ENCODE measurements at regions of chr6 and their contacts with region 1.

Region 1: DNA sequence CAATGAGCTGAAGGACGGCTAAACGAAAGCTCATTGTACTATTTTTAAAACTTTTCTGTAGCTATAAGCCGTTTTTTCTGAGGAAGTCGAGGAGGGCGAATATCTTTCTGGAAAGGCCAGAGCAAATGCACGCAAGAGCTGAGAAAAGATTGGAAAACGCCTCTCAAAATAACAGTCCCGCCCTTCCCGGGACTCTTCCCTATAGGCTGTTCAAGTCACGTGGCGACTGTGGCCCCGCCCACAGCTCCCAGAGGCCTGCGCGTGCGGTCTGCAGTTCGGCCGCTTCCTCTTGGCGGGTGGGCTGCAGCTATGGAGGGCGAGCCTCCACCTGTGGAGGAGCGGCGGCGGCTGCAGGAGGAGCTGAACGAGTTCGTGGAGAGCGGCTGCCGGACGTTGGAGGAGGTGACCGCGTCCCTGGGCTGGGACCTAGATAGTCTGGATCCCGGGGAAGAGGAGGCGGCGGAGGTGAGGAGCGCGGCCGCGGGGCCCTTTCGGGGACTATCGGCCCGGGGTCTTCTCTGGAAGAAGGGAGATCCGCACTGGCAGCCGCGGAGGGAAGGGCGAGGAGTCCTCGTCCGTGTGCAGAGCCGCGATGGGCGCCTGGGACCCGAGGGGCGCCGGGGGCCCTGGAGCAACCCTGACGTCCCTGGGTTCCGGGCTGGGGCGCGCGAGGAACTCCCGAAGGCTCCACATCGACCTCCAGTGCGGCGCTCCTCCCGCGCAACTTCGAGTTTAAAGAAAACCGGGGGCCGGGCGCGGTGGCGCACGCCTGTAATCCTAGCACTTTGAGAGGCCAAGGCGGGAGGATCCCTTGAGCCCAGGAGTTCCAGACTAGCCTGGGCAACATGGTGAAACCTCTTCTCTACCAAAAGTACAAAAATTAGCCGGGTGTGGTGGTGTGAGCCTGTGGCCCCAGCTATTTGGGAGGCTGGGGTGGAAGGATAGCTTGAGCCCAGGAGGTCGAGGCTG is at the start of gene SNRNP48:
- H3K4me3 Mint-ChIP-seq: peak within 1 kb of the TSS; percentile 89
- H3K27ac Mint-ChIP-seq: peak within 1 kb of the TSS; percentile 92
- H3K4me1 Mint-ChIP-seq: peaks cover 35% of the 10 kb centered on the region
- H3K27me3 Mint-ChIP-seq: no peaks in the 10 kb centered on the region

Region 2: GRCh38 chr6:7304821-7305220 is 285.4 kb before region 1 on chr6:
- intact Hi-C with region 1: loop called (anchors 5 kb)
- H3K4me3 Mint-ChIP-seq: no peak overlapping the region
- H3K27ac Mint-ChIP-seq: peak overlapping the region; percentile 13
- H3K4me1 Mint-ChIP-seq: peaks cover 44% of the 10 kb centered on the region
- H3K27me3 Mint-ChIP-seq: no peaks in the 10 kb centered on the region

Region 3: DNA sequence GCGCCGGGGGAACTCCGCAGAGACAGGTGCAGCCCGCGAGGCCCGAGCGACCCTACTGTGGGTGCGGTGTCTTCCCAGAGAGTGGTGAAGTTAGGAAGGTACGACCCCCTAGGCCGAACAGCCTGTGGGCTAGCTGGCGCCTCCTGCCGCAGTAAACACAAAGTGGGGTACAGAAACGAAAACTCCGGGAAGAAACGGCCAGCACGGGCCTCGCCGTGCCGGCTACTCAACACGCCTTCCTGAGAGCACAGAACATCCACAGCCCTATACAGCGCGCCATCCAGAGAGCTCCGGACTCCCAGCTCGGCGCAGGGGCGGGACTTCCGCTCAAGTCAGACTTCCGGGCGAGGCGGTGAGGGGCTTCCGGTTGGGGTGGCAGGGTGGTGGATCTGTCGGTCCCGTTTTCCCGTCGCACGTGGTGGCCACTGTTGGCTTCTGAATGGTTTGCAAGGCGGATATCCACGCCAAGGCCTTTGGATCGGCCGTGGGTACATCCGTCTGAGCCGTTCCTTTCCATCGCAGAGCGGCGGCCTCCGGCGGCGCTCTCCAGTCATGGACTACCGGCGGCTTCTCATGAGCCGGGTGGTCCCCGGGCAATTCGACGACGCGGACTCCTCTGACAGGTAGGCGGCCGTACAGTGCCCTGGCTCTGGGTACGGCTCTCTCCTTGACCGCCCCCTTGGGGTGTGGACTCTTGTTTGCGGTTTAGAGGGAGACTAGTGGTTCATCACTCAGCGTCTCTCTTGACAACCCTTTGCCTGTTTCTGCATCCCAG is 200.6 kb before region 1 on chr6 and contains the starts of genes CAGE1 and RIOK1:
- intact Hi-C with region 1: loop called (anchors 1 kb)
- H3K4me3 Mint-ChIP-seq: peak within 1 kb of the TSS; percentile 84
- H3K27ac Mint-ChIP-seq: peak within 1 kb of the TSS; percentile 91
- H3K4me1 Mint-ChIP-seq: peaks cover 45% of the 10 kb centered on the region
- H3K27me3 Mint-ChIP-seq: no peaks in the 10 kb centered on the region

Region 4: GRCh38 chr6:7424967-7425807 is 165.0 kb before region 1 on chr6:
- intact Hi-C with region 1: loop called (anchors 5 kb)
- H3K4me3 Mint-ChIP-seq: no peak overlapping the region
- H3K27ac Mint-ChIP-seq: no peak overlapping the region
- H3K4me1 Mint-ChIP-seq: no peaks in the 10 kb centered on the region
- H3K27me3 Mint-ChIP-seq: no peaks in the 10 kb centered on the region